Mammary epithelial cell (primary cell): ENCODE measurements at regions of chr12 and their contacts with region 1.

Region 1: GRCh38 chr12:70110085-70110484 is 133.1 kb upstream of the CNOT2 start:
- DNase-seq: no peak
- H3K4me3 ChIP-seq: no peak overlapping the region
- H3K27ac ChIP-seq: no peak overlapping the region
- H3K4me1 ChIP-seq: no peaks in the 10 kb centered on the region
- H3K27me3 ChIP-seq: no peaks in the 10 kb centered on the region
- CTCF ChIP-seq: no peak

Region 2: GRCh38 chr12:70032076-70032475 is 78.0 kb before region 1 on chr12:
- CTCF ChIA-PET with region 1: no interaction called
- dilution Hi-C with region 1: loop called (anchors 10 kb)
- in situ Hi-C with region 1: no loop called
- intact Hi-C with region 1: no loop called
- DNase-seq: no peak
- H3K4me3 ChIP-seq: no peak overlapping the region
- H3K27ac ChIP-seq: no peak overlapping the region
- H3K4me1 ChIP-seq: no peaks in the 10 kb centered on the region
- H3K27me3 ChIP-seq: no peaks in the 10 kb centered on the region
- CTCF ChIP-seq: no peak

Region 3: DNA sequence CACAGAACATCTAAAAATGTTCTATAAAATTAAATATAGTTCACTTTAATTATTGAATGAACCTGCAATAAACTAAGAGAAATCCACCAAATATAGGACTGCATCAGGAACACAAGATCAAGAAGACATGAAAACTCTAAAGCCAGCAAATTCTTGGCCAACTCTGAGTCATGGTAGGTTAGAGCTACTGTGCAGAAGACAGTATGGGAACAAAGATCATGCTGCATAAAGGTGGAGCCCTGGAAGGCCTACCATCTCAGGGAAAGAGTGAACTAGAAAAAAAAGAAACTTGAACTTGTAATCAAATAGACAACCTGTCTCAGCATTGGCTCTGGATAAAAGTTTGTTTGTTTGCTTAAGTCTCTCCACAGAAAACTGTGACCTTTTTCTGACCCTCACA is 66.2 kb after region 1 on chr12:
- CTCF ChIA-PET with region 1: no interaction called
- dilution Hi-C with region 1: no loop called
- in situ Hi-C with region 1: no loop called
- intact Hi-C with region 1: no loop called
- DNase-seq: no peak
- H3K4me3 ChIP-seq: no peak overlapping the region
- H3K27ac ChIP-seq: no peak overlapping the region
- H3K4me1 ChIP-seq: no peaks in the 10 kb centered on the region
- H3K27me3 ChIP-seq: no peaks in the 10 kb centered on the region
- CTCF ChIP-seq: no peak

Region 4: DNA sequence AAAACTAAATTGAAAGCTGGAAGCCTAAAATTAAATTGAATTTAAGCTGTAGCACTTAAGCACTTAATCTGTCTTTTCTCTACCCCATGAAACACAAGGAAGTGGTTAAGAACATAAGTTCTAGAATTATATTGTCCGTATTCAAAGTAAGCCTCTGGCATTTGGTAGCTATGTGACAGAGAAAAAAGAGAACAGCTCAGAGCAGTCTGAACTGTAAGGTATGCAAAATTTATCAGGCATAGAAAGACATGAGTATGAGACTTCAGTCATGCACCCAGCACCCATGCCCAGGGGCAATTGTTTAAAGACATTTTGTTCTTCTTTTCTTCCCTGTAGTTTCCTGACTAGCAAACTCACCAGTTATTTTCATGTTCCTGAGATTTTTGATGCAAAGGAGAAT is 372.7 kb after region 1 on chr12:
- CTCF ChIA-PET with region 1: no interaction called
- dilution Hi-C with region 1: no loop called
- in situ Hi-C with region 1: no loop called
- intact Hi-C with region 1: no loop called
- DNase-seq: peak; percentile 5
- H3K4me3 ChIP-seq: no peak overlapping the region
- H3K27ac ChIP-seq: no peak overlapping the region
- H3K4me1 ChIP-seq: no peaks in the 10 kb centered on the region
- H3K27me3 ChIP-seq: no peaks in the 10 kb centered on the region
- CTCF ChIP-seq: no peak